CD8-positive, alpha-beta T cell (primary cell): ENCODE measurements at regions of chr5 and their contacts with region 1.

Region 1: GRCh38 chr5:141878711-141879425 is 658 bp upstream of the PCDH1 start:
- DNase-seq: peak; percentile 73 to 96 (median 90)
- ATAC-seq: peak; percentile 84
- H3K4me3 ChIP-seq: peak overlapping the region; percentile 48 to 73
- H3K4me3 Mint-ChIP-seq: peak overlapping the region; percentile 76
- H3K27ac ChIP-seq: no peak overlapping the region
- H3K27ac Mint-ChIP-seq: peak overlapping the region; percentile 1
- H3K4me1 ChIP-seq: peaks cover 35% of the 10 kb centered on the region
- H3K4me1 Mint-ChIP-seq: peaks cover 26% of the 10 kb centered on the region
- H3K27me3 ChIP-seq: peaks cover 43 to 60% of the 10 kb centered on the region in 2 experiments
- H3K27me3 Mint-ChIP-seq: peaks cover 76% of the 10 kb centered on the region
- CTCF ChIP-seq: peak; percentile 98

Region 2: DNA sequence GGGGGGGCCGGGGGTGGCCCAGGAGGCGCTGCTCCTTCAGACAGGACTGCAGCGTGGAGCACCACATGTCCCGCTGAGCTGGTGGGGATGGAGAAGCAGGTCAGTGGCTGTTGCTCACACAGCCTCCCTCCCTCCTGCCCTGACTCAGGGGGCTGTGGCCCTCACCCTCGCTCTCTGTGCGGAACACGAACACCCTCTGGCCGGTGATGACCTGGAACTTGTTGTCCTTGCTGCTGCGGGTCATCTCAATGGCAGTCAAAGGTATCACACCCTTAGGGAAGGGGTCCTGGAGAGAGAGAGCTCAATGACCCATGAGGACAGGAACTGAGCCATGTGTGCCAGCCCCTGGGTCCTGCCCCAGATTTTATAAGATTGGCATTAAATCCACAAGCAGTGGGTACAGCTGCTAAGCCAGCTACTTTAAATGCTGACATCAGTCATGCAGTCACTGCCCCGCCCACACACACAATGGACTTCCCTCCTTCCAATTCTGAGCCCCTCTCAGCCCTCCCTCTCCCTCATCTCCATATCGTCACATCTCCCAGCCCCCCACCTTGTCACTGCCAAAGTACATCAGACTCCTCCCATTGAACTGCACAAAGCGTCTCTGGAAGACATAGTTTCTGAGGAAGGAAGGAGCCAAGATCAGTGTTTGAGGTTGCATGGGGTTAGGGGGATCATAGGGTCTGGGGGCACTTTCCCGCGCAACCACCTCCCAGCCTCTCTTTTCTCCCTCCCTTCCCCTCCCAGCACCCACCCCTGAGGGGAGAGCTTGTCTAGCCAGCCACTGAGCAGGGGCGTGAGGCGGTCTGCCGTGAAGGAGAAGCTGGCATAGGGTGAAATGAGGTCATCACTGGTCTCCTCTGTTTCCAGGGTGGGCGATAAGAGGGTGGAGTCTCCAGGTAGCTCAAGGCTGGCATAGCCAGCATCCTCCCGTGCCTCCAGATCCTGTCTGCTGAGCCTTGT is 205.7 kb before region 1 on chr5:
- CTCF ChIA-PET with region 1: interaction called, 85 read pairs
- POLR2A ChIA-PET with region 1: no interaction called
- intact Hi-C with region 1: no loop called
- DNase-seq: no peak
- ATAC-seq: no peak
- H3K4me3 ChIP-seq: no peak overlapping the region
- H3K4me3 Mint-ChIP-seq: no peak overlapping the region
- H3K27ac ChIP-seq: no peak overlapping the region
- H3K27ac Mint-ChIP-seq: no peak overlapping the region
- H3K4me1 ChIP-seq: no peaks in the 10 kb centered on the region
- H3K4me1 Mint-ChIP-seq: no peaks in the 10 kb centered on the region
- H3K27me3 ChIP-seq: no peaks in the 10 kb centered on the region
- H3K27me3 Mint-ChIP-seq: no peaks in the 10 kb centered on the region
- CTCF ChIP-seq: no peak

Region 3: DNA sequence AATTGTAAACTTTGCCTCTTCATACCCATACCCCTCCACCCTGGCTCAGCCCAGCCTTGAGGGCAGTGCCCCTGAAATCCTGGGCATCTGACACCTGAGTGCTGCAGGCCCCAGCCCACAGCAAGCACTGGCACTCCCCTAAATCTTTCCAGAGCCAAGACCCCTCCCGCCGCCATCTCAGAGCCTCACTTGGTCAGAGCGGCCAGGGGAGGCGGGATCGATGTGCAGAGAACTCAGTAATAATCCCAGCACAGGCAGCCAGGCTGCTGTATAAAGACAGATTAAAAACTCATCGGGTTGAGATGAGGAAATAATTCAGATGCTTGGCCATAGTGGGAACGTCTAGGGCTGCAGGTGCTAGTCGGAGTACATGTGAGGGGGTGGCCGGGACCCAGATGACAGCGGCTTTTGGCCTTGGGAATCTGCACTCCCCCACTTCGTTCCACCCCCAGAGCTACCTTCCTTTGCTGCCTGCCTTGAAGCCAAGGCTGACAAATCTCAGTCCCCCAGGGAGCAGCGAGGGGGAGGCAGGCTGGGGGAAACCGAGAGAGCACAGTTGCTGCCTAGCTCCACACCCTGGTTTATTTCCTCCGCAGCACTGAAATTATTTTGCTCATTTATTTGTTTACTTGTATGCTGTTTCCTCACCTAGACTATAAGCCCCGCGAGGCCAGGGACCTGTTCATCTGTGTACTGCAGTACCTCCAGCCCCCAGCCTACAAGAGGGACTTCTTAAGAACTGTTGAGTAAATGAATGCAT is 177.3 kb before region 1 on chr5:
- CTCF ChIA-PET with region 1: interaction called, 350 read pairs
- POLR2A ChIA-PET with region 1: interaction called, 15 read pairs
- intact Hi-C with region 1: loop called (anchors 1 kb)
- DNase-seq: peak in 1 of 9 experiments; percentile 30
- ATAC-seq: peak; percentile 13
- H3K4me3 ChIP-seq: peak overlapping the region; percentile 57 to 89
- H3K4me3 Mint-ChIP-seq: no peak overlapping the region
- H3K27ac ChIP-seq: no peak overlapping the region
- H3K27ac Mint-ChIP-seq: no peak overlapping the region
- H3K4me1 ChIP-seq: peaks cover 15% of the 10 kb centered on the region
- H3K4me1 Mint-ChIP-seq: peaks cover 19% of the 10 kb centered on the region
- H3K27me3 ChIP-seq: peaks cover 0 to 3% of the 10 kb centered on the region in 2 experiments
- H3K27me3 Mint-ChIP-seq: peaks cover 45% of the 10 kb centered on the region
- CTCF ChIP-seq: no peak

Region 4: GRCh38 chr5:141849375-141850243 is 29.3 kb before region 1 on chr5:
- CTCF ChIA-PET with region 1: interaction called, 7 read pairs
- POLR2A ChIA-PET with region 1: no interaction called
- intact Hi-C with region 1: loop called (anchors 1 to 2 kb)
- DNase-seq: peak; percentile 42 to 83 (median 70)
- ATAC-seq: peak; percentile 79
- H3K4me3 ChIP-seq: peak overlapping the region; percentile 77 to 84
- H3K4me3 Mint-ChIP-seq: peak overlapping the region; percentile 87
- H3K27ac ChIP-seq: peak overlapping the region; percentile 73
- H3K27ac Mint-ChIP-seq: peak overlapping the region; percentile 82
- H3K4me1 ChIP-seq: peaks cover 7% of the 10 kb centered on the region
- H3K4me1 Mint-ChIP-seq: peaks cover 10% of the 10 kb centered on the region
- H3K27me3 ChIP-seq: no peaks in the 10 kb centered on the region
- H3K27me3 Mint-ChIP-seq: peaks cover 2% of the 10 kb centered on the region
- CTCF ChIP-seq: no peak

Region 5: DNA sequence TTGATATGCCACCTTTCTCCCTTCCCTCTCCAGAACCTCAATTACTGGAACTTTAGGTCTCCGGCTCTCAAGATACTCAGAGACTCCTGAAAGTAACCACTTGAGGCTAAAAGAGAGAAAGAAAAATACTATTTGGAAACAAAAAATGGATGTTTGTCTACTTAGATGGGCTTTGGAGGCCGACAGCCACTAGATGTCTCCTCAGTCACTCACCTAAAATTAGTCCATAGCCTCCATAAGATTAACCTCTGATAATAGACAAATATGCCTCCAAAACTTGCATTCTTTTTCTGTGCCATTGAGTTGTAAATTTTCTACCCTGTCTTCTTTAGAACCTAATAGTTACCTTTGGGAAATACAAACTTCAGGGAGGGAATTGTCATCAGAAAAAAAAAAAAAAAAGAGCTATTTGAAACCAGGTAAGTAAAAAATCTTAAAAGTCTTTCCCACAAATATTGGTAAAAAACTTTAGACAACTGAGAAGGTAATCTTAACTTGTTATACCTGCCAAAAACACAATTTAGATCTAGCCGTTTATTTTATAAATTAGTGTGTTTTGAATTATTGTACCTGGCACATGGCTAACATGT is 10.5 kb after region 1 on chr5:
- CTCF ChIA-PET with region 1: interaction called, 43 read pairs
- POLR2A ChIA-PET with region 1: no interaction called
- intact Hi-C with region 1: no loop called
- DNase-seq: no peak
- ATAC-seq: no peak
- H3K4me3 ChIP-seq: no peak overlapping the region
- H3K4me3 Mint-ChIP-seq: no peak overlapping the region
- H3K27ac ChIP-seq: no peak overlapping the region
- H3K27ac Mint-ChIP-seq: no peak overlapping the region
- H3K4me1 ChIP-seq: no peaks in the 10 kb centered on the region
- H3K4me1 Mint-ChIP-seq: no peaks in the 10 kb centered on the region
- H3K27me3 ChIP-seq: peaks cover 0 to 7% of the 10 kb centered on the region in 2 experiments
- H3K27me3 Mint-ChIP-seq: peaks cover 31% of the 10 kb centered on the region
- CTCF ChIP-seq: no peak

Region 6: GRCh38 chr5:141923448-141924352 is 44.8 kb after region 1 on chr5 and contains the start of gene DELE1:
- CTCF ChIA-PET with region 1: interaction called, 10 read pairs
- POLR2A ChIA-PET with region 1: no interaction called
- intact Hi-C with region 1: loop called in 1 of 2 experiments (anchors 1 kb)
- DNase-seq: peak; percentile 77 to 95 (median 91)
- ATAC-seq: peak; percentile 93
- H3K4me3 ChIP-seq: peak within 1 kb of the TSS; percentile 65 to 88
- H3K4me3 Mint-ChIP-seq: peak within 1 kb of the TSS; percentile 95
- H3K27ac ChIP-seq: peak within 1 kb of the TSS; percentile 98
- H3K27ac Mint-ChIP-seq: peak within 1 kb of the TSS; percentile 98
- H3K4me1 ChIP-seq: peaks cover 16% of the 10 kb centered on the region
- H3K4me1 Mint-ChIP-seq: peaks cover 40% of the 10 kb centered on the region
- H3K27me3 ChIP-seq: no peaks in the 10 kb centered on the region
- H3K27me3 Mint-ChIP-seq: no peaks in the 10 kb centered on the region
- CTCF ChIP-seq: no peak
- total RNA-seq, gene DELE1: 61.7 to 65.0 TPM

Region 7: GRCh38 chr5:141997358-141997960 is 118.6 kb after region 1 on chr5:
- CTCF ChIA-PET with region 1: no interaction called
- POLR2A ChIA-PET with region 1: no interaction called
- intact Hi-C with region 1: no loop called
- DNase-seq: no peak
- ATAC-seq: no peak
- H3K4me3 ChIP-seq: no peak overlapping the region
- H3K4me3 Mint-ChIP-seq: no peak overlapping the region
- H3K27ac ChIP-seq: no peak overlapping the region
- H3K27ac Mint-ChIP-seq: peak overlapping the region; percentile 25
- H3K4me1 ChIP-seq: no peaks in the 10 kb centered on the region
- H3K4me1 Mint-ChIP-seq: peaks cover 4% of the 10 kb centered on the region
- H3K27me3 ChIP-seq: no peaks in the 10 kb centered on the region
- H3K27me3 Mint-ChIP-seq: no peaks in the 10 kb centered on the region
- CTCF ChIP-seq: no peak